ENCODE measurements at regions of chr11 and their contacts with region 1.

Region 1: GRCh38 chr11:62601394-62602140 is at the start of gene MTA2:
- DNase-seq: peak; percentile 98 to 100 (median 99)
- ATAC-seq: peak; percentile 79
- H3K4me3 ChIP-seq: peak within 1 kb of the TSS; percentile 100
- H3K4me3 Mint-ChIP-seq: peak within 1 kb of the TSS; percentile 94
- H3K27ac ChIP-seq: peak within 1 kb of the TSS; percentile 85 to 94
- H3K27ac Mint-ChIP-seq: peak within 1 kb of the TSS; percentile 93
- H3K4me1 ChIP-seq: peaks cover 46% of the 10 kb centered on the region
- H3K4me1 Mint-ChIP-seq: peaks cover 56% of the 10 kb centered on the region
- H3K27me3 ChIP-seq: no peaks in the 10 kb centered on the region
- H3K27me3 Mint-ChIP-seq: no peaks in the 10 kb centered on the region
- CTCF ChIP-seq: no peak
- total RNA-seq, gene MTA2: 167 to 172 TPM

Region 2: GRCh38 chr11:62612366-62613290 is 11.1 kb after region 1 on chr11 and contains the starts of genes EML3 and ROM1:
- CTCF ChIA-PET with region 1: interaction called, 6 read pairs
- POLR2A ChIA-PET with region 1: interaction called, 35 read pairs
- intact Hi-C with region 1: no loop called
- DNase-seq: peak; percentile 77 to 94 (median 89)
- ATAC-seq: peak; percentile 76
- H3K4me3 ChIP-seq: peak within 1 kb of the TSS; percentile 92
- H3K4me3 Mint-ChIP-seq: peak within 1 kb of the TSS; percentile 90
- H3K27ac ChIP-seq: peak within 1 kb of the TSS; percentile 78 to 90
- H3K27ac Mint-ChIP-seq: peak within 1 kb of the TSS; percentile 94
- H3K4me1 ChIP-seq: peaks cover 63% of the 10 kb centered on the region
- H3K4me1 Mint-ChIP-seq: peaks cover 44% of the 10 kb centered on the region
- H3K27me3 ChIP-seq: no peaks in the 10 kb centered on the region
- H3K27me3 Mint-ChIP-seq: no peaks in the 10 kb centered on the region
- CTCF ChIP-seq: peak; percentile 87
- total RNA-seq, gene EML3: 142 to 144 TPM
- total RNA-seq, gene ROM1: 0.42 to 0.71 TPM

Region 3: DNA sequence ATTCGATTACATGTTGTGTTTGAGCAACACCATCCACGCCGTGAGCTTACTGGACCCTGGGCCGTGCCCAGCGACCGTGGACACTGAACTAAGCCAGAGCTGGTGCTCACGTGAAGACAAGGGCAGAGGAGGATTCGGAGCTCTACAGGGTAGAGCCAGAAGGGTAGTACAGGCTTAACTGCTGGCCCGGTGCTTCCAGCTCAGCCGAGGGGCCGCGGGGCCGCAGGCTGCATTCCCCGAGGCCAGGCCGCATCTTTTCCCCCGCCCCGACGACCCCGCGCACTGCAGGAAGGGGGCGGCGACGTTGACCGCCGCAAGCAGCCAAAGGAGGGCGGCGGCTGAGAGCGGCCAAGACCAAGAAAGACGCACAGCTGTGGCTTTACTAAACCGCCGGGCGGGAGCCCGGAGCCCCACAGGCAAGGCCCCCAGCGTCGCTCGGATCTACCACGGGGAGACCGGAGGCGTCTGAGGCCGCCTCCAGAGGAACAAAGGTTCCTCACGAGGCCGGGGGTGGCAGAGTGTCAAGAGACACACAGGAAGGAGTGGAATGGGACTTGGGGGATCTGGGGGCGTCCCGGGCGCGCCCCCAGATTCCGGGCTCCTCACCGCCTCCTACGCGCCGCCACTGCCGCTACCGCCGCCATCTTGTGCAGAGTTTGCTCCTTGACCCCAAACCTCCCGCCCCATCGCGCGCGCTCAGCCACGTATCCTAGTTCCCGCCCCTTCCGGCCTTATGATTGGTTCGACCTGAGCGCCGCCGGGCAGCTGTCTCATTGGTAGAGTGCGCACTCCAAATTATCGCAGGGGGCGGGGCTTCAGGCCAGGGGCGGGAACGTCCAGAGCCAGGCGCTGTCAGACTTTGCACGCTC is 44.6 kb after region 1 on chr11 and contains the start of gene GANAB:
- CTCF ChIA-PET with region 1: no interaction called
- POLR2A ChIA-PET with region 1: interaction called, 18 read pairs
- intact Hi-C with region 1: loop called in 1 of 2 experiments (anchors 2 kb)
- DNase-seq: peak; percentile 97 to 100 (median 99)
- ATAC-seq: peak; percentile 98
- H3K4me3 ChIP-seq: peak within 1 kb of the TSS; percentile 98
- H3K4me3 Mint-ChIP-seq: peak within 1 kb of the TSS; percentile 96
- H3K27ac ChIP-seq: peak within 1 kb of the TSS; percentile 82 to 97
- H3K27ac Mint-ChIP-seq: peak within 1 kb of the TSS; percentile 99
- H3K4me1 ChIP-seq: peaks cover 42% of the 10 kb centered on the region
- H3K4me1 Mint-ChIP-seq: peaks cover 29% of the 10 kb centered on the region
- H3K27me3 ChIP-seq: no peaks in the 10 kb centered on the region
- H3K27me3 Mint-ChIP-seq: no peaks in the 10 kb centered on the region
- CTCF ChIP-seq: no peak
- total RNA-seq, gene GANAB: 181 to 182 TPM

Region 4: GRCh38 chr11:62705880-62706849 is 104.6 kb after region 1 on chr11:
- CTCF ChIA-PET with region 1: no interaction called
- POLR2A ChIA-PET with region 1: interaction called, 14 read pairs
- intact Hi-C with region 1: no loop called
- DNase-seq: peak; percentile 90 to 97 (median 94)
- ATAC-seq: peak; percentile 62
- H3K4me3 ChIP-seq: peak overlapping the region; percentile 79
- H3K4me3 Mint-ChIP-seq: peak overlapping the region; percentile 86
- H3K27ac ChIP-seq: peak overlapping the region; percentile 65 to 84
- H3K27ac Mint-ChIP-seq: peak overlapping the region; percentile 92
- H3K4me1 ChIP-seq: peaks cover 49% of the 10 kb centered on the region
- H3K4me1 Mint-ChIP-seq: peaks cover 42% of the 10 kb centered on the region
- H3K27me3 ChIP-seq: no peaks in the 10 kb centered on the region
- H3K27me3 Mint-ChIP-seq: no peaks in the 10 kb centered on the region
- CTCF ChIP-seq: no peak

Region 5: GRCh38 chr11:62737196-62737595 is 135.6 kb after region 1 on chr11:
- CTCF ChIA-PET with region 1: no interaction called
- POLR2A ChIA-PET with region 1: no interaction called
- intact Hi-C with region 1: no loop called
- DNase-seq: no peak
- ATAC-seq: no peak
- H3K4me3 ChIP-seq: no peak overlapping the region
- H3K4me3 Mint-ChIP-seq: no peak overlapping the region
- H3K27ac ChIP-seq: no peak overlapping the region
- H3K27ac Mint-ChIP-seq: no peak overlapping the region
- H3K4me1 ChIP-seq: peaks cover 5% of the 10 kb centered on the region
- H3K4me1 Mint-ChIP-seq: peaks cover 8% of the 10 kb centered on the region
- H3K27me3 ChIP-seq: no peaks in the 10 kb centered on the region
- H3K27me3 Mint-ChIP-seq: no peaks in the 10 kb centered on the region
- CTCF ChIP-seq: no peak

Region 6: GRCh38 chr11:62855571-62856332 is 254.2 kb after region 1 on chr11:
- CTCF ChIA-PET with region 1: no interaction called
- POLR2A ChIA-PET with region 1: interaction called, 14 read pairs
- intact Hi-C with region 1: loop called in 1 of 2 experiments (anchors 5 kb)
- DNase-seq: peak; percentile 96 to 99 (median 98)
- ATAC-seq: peak; percentile 92
- H3K4me3 ChIP-seq: peak overlapping the region; percentile 79
- H3K4me3 Mint-ChIP-seq: peak overlapping the region; percentile 98
- H3K27ac ChIP-seq: peak overlapping the region; percentile 66 to 72
- H3K27ac Mint-ChIP-seq: peak overlapping the region; percentile 90
- H3K4me1 ChIP-seq: peaks cover 41% of the 10 kb centered on the region
- H3K4me1 Mint-ChIP-seq: peaks cover 63% of the 10 kb centered on the region
- H3K27me3 ChIP-seq: no peaks in the 10 kb centered on the region
- H3K27me3 Mint-ChIP-seq: no peaks in the 10 kb centered on the region
- CTCF ChIP-seq: no peak

Measured in CD4-positive, alpha-beta T cell (primary cell).